Left cardiac atrium (tissue), 4 donors: ENCODE measurements at regions of chr14 and their contacts with region 1.

Region 1: DNA sequence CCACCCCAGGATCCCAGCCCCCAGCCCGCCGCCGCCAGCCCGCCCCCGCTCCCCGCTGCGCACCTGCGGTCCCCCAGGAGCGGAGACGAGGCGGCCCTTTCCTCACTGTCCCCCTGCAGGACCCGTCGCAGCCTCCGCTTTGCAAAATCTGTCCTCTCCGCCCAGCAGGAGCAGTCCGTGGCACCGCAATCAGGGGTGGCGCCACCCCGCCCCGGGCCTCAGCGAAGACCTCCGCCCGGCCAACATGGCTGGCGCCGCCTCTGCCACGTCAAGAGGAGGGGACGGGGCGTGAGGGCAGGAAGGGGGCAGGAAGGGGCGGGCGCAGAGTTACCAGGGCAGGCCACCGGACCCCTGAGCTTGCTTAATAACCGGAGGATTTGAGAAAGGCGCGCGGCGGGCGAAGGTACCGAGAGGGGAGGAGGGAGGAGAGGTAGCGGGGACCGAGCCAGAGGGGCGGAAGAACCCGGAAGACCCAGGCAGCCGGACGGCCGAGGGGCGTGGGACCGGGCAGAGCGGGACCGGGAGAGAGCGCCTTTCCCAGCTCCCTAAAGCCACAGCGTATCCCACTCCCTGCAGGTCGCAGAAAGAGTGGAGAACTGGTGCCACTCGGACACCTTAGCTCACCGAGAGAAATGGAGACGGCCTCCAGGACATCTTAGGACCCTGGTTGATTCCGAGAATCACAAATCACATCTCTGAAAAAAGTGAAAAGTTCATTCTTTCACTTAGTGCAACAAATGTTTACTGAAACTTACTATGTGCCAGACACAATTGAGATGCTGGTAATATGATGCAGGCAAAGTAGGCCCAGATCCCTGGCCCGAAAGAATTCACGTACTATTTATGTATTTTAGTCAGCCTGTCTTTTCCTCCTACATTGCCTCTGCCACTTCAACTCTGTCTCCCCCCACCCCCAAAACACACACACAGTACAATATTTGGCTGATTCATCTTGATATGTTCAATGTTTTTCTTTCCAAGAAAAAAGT is at the start of gene SEC23A:
- DNase-seq: peak; percentile 95
- ATAC-seq: peak; percentile 99
- total RNA-seq, gene SEC23A: 87.1 to 140 TPM

Region 2: GRCh38 chr14:39169541-39169900 is 66.3 kb after region 1 on chr14:
- intact Hi-C with region 1: loop called in 1 of 2 experiments (anchors 10 kb)
- DNase-seq: no peak
- ATAC-seq: peak; percentile 36 to 55

Region 3: DNA sequence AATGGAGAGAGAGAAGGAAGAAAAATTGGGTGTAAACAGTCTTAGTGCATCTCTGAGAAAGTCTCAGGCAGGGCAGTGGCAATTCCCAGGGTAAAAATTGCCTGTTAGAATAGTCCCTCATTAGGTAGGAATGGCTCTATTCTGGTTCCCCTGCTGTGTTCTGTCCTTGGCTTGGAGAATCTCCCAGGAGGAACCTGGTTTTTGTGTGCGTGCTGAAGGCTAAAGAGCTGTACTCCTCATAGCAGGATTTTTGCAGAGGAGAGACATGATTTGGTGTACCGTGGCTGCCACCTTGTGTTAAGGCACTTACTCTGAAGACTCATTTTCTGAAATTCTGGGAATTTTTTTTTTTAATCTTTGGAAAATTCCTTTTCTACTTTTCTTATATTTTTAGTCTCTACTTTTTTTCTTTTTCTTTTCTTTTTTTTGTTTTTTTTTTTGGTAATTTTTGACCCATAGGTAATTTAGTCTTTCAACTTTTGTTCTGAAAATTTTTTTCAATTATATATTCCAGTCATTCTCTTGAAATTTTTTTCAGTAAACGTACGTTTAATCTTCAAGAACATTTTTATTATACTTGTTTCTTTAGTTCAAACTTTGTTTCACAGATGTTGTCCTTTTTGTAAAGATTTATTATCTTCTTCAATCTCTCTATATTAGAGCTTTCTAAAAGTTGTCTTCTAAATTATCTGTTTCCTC is 265.1 kb after region 1 on chr14:
- intact Hi-C with region 1: loop called in 1 of 2 experiments (anchors 10 kb)
- DNase-seq: peak; percentile 37
- ATAC-seq: peak; percentile 77 to 78

Region 4: DNA sequence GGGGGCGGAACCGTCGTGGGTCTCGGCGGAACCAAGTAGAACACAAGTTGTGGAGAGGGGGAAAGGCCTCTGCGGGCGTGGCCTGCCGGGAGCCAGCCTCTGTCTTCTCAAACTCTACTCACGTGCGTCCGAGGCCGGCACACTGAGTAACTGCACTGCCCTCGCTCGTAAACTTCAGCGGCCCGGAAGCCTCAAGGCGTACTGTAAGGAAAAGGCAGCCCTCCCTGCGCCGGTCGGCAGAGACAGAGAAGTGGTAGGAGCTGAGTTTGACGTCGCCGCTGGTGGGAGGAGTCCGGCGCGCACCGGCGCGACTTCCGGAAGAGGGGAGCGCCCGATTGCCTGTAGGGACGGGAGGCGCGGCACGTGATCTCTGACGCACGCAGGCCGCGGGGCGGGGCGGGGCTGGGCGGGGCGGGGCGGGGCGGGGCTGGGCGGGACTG is 328.9 kb after region 1 on chr14 and contains the start of gene FBXO33:
- intact Hi-C with region 1: loop called in 1 of 2 experiments (anchors 10 kb)
- DNase-seq: peak; percentile 97
- ATAC-seq: peak; percentile 94 to 95
- total RNA-seq, gene FBXO33: 5.2 to 5.3 TPM